Endothelial cell of umbilical vein (primary cell): ENCODE measurements at regions of chr7 and their contacts with region 1.

Region 1: GRCh38 chr7:77866786-77867536 is 68.4 kb downstream of the PHTF2 start:
- DNase-seq: peak; percentile 79
- H3K4me3 ChIP-seq: no peak overlapping the region
- H3K27ac ChIP-seq: peak overlapping the region; percentile 95
- H3K4me1 ChIP-seq: peaks cover 18% of the 10 kb centered on the region
- H3K27me3 ChIP-seq: no peaks in the 10 kb centered on the region
- CTCF ChIP-seq: no peak
- POLR2A ChIP-seq: no peak

Region 2: GRCh38 chr7:77714195-77714594 is 152.8 kb before region 1 on chr7:
- CTCF ChIA-PET with region 1: no interaction called
- POLR2A ChIA-PET with region 1: no interaction called
- dilution Hi-C with region 1: no loop called
- intact Hi-C with region 1: no loop called
- DNase-seq: no peak
- H3K4me3 ChIP-seq: no peak overlapping the region
- H3K27ac ChIP-seq: no peak overlapping the region
- H3K4me1 ChIP-seq: no peaks in the 10 kb centered on the region
- H3K27me3 ChIP-seq: no peaks in the 10 kb centered on the region
- CTCF ChIP-seq: no peak
- POLR2A ChIP-seq: no peak

Region 3: DNA sequence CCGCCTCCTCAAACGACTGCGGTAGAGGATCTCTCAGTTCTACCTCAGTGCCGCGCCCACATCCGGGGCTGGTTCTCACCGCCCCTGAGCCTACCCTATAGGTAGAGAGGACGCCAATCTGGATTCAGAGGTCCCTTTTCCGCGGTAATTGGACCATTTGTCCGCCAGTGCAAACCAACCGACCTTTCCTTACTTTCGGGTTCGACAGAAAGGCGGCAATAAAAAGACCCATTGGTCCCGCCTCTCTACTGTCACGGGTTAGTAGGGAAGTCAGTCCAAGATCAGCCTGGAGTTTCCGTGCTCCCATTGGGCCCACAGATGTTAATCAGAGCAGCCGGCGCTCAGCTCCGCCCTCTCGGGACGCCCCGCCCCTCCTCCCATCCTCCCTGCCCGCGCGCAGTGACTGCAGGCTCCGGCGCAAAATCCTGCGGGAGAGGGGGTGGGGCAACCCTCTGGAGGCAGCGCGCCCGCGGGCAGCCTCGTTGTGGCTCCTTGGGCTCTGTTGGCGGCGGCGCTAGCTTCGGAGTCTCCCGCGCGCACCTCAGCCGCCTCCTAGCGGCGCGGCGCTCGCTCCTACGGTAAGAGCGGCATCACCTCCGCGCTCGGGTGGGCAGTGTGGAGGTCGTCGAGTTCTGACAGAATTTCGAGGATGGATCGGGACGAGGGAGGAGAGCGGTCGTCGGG is 68.4 kb before region 1 on chr7 and contains the starts of genes PHTF2 and TMEM60:
- CTCF ChIA-PET with region 1: interaction called, 7 read pairs
- POLR2A ChIA-PET with region 1: no interaction called
- dilution Hi-C with region 1: no loop called
- intact Hi-C with region 1: loop called (anchors 1 kb)
- DNase-seq: peak; percentile 100
- H3K4me3 ChIP-seq: peak within 1 kb of the TSS; percentile 70 to 94 (median 90)
- H3K27ac ChIP-seq: peak within 1 kb of the TSS; percentile 66
- H3K4me1 ChIP-seq: peaks cover 31% of the 10 kb centered on the region
- H3K27me3 ChIP-seq: no peaks in the 10 kb centered on the region
- CTCF ChIP-seq: peak; percentile 41 to 73
- POLR2A ChIP-seq: peak; percentile 15
- total RNA-seq, gene PHTF2: 21.4 TPM in 2 replicates
- total RNA-seq, gene TMEM60: 15.0 and 15.8 TPM in 2 replicates